ENCODE measurements at regions of chr1 and their contacts with region 1.

Region 1: GRCh38 chr1:24694380-24694843 is 50.8 kb upstream of the CLIC4 start:
- DNase-seq: peak; percentile 53
- ATAC-seq: peak; percentile 63
- H3K4me3 ChIP-seq: no peak overlapping the region
- H3K27ac ChIP-seq: peak overlapping the region; percentile 2; the same call in 1 of the 2 replicates
- H3K4me1 ChIP-seq: peaks cover 9% of the 10 kb centered on the region
- H3K27me3 ChIP-seq: no peaks in the 10 kb centered on the region
- CTCF ChIP-seq: no peak
- POLR2A ChIP-seq: no peak
- RAD21 ChIP-seq: no peak

Region 2: DNA sequence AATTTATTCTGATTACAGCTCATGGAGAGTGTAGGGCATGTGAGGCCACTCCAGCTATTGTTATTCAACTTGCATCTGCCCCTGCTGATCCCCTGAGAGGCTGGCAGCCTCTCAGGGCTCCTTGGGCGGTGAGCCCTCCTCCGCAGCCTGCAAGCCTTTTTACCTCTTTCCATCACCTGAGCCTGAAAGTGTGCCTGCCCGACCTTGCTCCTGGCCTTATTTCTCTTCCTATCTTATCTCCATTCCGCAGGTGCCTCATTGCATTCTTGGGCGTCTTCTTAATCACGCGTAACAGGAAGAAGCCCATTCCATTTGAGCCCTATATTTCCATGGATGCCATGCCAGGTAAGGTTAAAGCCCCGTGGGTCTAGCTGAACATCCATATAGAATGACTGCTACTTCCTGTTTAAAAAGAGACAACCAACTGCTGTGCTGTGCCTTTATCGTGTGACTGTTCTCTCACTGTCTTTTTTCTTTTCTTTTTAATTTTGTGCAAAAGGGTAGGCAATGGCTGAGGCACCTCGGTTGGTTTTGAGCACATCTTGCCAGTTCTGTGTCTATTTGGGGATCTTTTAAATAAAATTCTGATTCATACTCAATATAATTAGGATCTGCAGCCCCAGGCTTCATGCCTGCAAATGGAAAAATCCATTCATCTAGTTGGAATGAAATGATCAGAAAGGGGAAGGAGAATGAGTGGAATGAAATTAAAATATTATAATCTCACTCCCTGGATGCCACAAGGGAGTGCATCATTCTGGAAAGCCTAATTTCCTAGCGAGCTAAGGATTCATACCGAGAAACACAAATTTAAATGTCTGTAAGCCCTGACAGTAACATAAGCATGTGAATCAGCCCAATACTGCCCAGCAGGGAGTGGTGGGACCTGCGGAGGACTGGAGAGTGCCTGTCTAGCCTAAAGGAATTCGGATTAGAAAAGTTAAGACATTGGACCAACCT is 230.4 kb before region 1 on chr1:
- CTCF ChIA-PET with region 1: no interaction called
- POLR2A ChIA-PET with region 1: no interaction called
- dilution Hi-C with region 1: no loop called
- in situ Hi-C with region 1: no loop called
- intact Hi-C with region 1: no loop called
- DNase-seq: peak; percentile 37
- ATAC-seq: peak; percentile 82
- H3K4me3 ChIP-seq: no peak overlapping the region
- H3K27ac ChIP-seq: no peak overlapping the region
- H3K4me1 ChIP-seq: peaks cover 4% of the 10 kb centered on the region
- H3K27me3 ChIP-seq: no peaks in the 10 kb centered on the region
- CTCF ChIP-seq: no peak
- POLR2A ChIP-seq: no peak
- RAD21 ChIP-seq: no peak

Region 3: DNA sequence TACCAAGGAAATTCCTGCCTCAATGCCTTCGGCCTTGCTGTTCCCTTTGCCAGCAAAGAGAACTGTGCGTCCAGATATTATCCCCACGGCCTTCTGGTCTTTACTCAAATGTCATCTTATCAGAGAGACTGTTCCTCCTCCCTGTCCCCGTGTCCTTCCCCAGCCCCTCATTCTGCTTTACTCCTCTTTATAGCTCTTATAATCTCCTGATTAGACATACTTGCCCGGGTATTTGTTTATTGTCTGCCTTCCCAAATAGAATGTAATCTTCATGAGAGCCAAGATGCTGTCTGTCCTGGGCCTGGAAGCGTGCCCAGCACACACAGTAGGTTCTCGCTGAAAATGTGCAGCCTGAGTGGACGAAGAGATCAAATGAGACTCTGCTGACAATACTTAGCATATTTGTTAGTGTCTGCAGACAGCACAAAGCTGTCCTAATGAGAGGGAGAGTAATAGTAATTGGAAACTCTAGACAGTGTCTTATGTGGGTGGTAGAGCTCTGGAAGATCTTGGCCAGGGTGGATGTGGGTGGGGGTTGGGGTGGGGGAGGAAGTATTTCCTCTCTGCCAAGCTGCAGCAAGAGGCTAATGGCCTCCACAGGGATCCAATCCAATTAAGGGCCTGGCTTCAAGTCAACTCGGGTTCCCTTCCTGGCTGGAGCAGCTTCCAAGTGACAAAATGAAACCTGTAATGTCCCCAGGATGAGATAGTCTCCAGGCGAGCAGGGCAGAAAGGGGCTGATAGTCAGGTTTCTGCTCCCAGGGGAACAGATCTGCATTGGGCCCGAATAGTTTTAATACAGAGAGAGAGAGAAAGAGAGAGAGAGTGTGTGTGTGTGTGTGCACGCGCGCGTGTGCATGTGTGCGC is 41.3 kb after region 1 on chr1:
- CTCF ChIA-PET with region 1: no interaction called
- POLR2A ChIA-PET with region 1: no interaction called
- dilution Hi-C with region 1: no loop called
- in situ Hi-C with region 1: loop called (anchors 5 kb)
- intact Hi-C with region 1: no loop called
- DNase-seq: peak; percentile 52
- ATAC-seq: peak; percentile 84
- H3K4me3 ChIP-seq: no peak overlapping the region
- H3K27ac ChIP-seq: peak overlapping the region; percentile 86
- H3K4me1 ChIP-seq: peaks cover 15% of the 10 kb centered on the region
- H3K27me3 ChIP-seq: no peaks in the 10 kb centered on the region
- CTCF ChIP-seq: no peak
- POLR2A ChIP-seq: no peak
- RAD21 ChIP-seq: no peak

Measured in IMR-90 (cell line).